GM12878 (cell line): ENCODE measurements at regions of chr3 and their contacts with region 1.

Region 1: GRCh38 chr3:134904241-134904771 is 109.2 kb downstream of the EPHB1 start:
- DNase-seq: peak; percentile 97
- ATAC-seq: peak; percentile 94
- H3K4me3 ChIP-seq: peak overlapping the region; percentile 27; the same call in 1 of the 2 replicates
- H3K27ac ChIP-seq: peak overlapping the region; percentile 79
- H3K4me1 ChIP-seq: peaks cover 39% of the 10 kb centered on the region
- H3K27me3 ChIP-seq: no peaks in the 10 kb centered on the region
- CTCF ChIP-seq: no peak
- EP300 ChIP-seq: peak; percentile 98 to 99
- POLR2A ChIP-seq: no peak
- RAD21 ChIP-seq: 0 out of 2 replicates have a peak, but pooled peaks have one; percentile 16

Region 2: DNA sequence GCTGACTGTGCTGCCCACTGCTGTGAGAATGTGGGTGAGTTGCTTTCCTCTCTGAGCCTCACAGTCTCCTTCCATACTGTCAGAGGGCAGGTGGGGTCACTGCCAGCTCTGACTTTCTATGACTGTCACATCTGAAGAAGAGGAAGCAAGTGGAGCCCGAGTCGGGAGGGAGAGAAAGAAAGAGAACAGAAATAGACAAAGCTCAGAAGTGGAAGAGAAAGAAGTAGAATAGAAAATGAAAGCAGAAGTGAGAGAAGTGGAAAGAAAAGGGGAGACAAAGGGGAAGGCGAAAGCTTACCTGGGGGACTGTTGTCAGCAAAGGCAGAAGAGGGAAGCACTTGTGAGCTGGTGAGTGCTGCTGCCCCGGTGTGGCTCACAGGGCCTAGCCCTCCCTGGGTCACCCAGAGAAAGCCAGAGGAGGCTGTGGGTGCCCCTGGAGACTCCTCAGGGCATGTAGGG is 51.4 kb before region 1 on chr3:
- CTCF ChIA-PET with region 1: interaction called, 5 read pairs
- POLR2A ChIA-PET with region 1: interaction called, 6 read pairs
- RAD21 ChIA-PET with region 1: interaction called, 23 read pairs
- SMC1A ChIA-PET with region 1: interaction called, 16 read pairs
- in situ Hi-C with region 1: no loop called
- intact Hi-C with region 1: loop called (anchors 5 kb)
- DNase-seq: peak; percentile 91
- ATAC-seq: peak; percentile 96
- H3K4me3 ChIP-seq: no peak overlapping the region
- H3K27ac ChIP-seq: peak overlapping the region; percentile 68
- H3K4me1 ChIP-seq: peaks cover 36% of the 10 kb centered on the region
- H3K27me3 ChIP-seq: no peaks in the 10 kb centered on the region
- CTCF ChIP-seq: peak in 2 of 3 experiments; percentile 25 to 32; a peak in 2 of 6 replicates
- EP300 ChIP-seq: peak; percentile 56 to 69; a peak in 2 of 4 replicates
- POLR2A ChIP-seq: peak; percentile 56; the same call in 1 of the 2 replicates
- RAD21 ChIP-seq: peak; percentile 39

Region 3: GRCh38 chr3:134918441-134918840 is 14.1 kb after region 1 on chr3:
- CTCF ChIA-PET with region 1: interaction called, 15 read pairs
- POLR2A ChIA-PET with region 1: interaction called, 9 read pairs
- RAD21 ChIA-PET with region 1: interaction called, 13 read pairs
- SMC1A ChIA-PET with region 1: interaction called, 47 read pairs
- in situ Hi-C with region 1: no loop called
- intact Hi-C with region 1: no loop called
- DNase-seq: peak; percentile 78
- ATAC-seq: peak; percentile 97
- H3K4me3 ChIP-seq: no peak overlapping the region
- H3K27ac ChIP-seq: peak overlapping the region; percentile 80
- H3K4me1 ChIP-seq: peaks cover 21% of the 10 kb centered on the region
- H3K27me3 ChIP-seq: no peaks in the 10 kb centered on the region
- CTCF ChIP-seq: no peak
- EP300 ChIP-seq: 0 out of 4 replicates have a peak, but pooled peaks of 1 of the 2 experiments have one; percentile 10
- POLR2A ChIP-seq: no peak
- RAD21 ChIP-seq: no peak

Region 4: DNA sequence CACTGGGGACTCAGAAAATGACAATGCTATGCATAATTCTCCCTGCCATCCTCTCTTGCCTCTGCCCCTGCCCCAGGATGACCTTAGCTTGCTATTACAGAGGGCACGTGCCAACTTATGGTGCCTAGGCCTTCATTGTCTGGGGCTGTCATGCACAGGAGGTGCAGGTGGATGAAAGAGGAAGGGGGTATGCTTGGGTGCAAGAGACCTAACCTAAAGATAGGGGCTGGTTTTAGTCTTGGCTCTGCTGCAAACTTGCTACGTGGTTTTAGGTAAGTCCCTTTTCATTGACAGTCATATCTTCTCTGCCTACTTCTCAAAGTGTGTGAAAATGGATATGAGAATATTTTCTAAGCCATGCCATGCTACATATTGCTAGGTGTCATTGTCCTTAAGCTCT is 52.1 kb after region 1 on chr3:
- CTCF ChIA-PET with region 1: interaction called, 3 read pairs
- POLR2A ChIA-PET with region 1: interaction called, 7 read pairs
- RAD21 ChIA-PET with region 1: interaction called, 36 read pairs
- SMC1A ChIA-PET with region 1: interaction called, 35 read pairs
- in situ Hi-C with region 1: no loop called
- intact Hi-C with region 1: no loop called
- DNase-seq: peak; percentile 76
- ATAC-seq: peak; percentile 85
- H3K4me3 ChIP-seq: no peak overlapping the region
- H3K27ac ChIP-seq: peak overlapping the region; percentile 73
- H3K4me1 ChIP-seq: peaks cover 27% of the 10 kb centered on the region
- H3K27me3 ChIP-seq: no peaks in the 10 kb centered on the region
- CTCF ChIP-seq: no peak
- EP300 ChIP-seq: no peak
- POLR2A ChIP-seq: no peak
- RAD21 ChIP-seq: no peak

Region 5: DNA sequence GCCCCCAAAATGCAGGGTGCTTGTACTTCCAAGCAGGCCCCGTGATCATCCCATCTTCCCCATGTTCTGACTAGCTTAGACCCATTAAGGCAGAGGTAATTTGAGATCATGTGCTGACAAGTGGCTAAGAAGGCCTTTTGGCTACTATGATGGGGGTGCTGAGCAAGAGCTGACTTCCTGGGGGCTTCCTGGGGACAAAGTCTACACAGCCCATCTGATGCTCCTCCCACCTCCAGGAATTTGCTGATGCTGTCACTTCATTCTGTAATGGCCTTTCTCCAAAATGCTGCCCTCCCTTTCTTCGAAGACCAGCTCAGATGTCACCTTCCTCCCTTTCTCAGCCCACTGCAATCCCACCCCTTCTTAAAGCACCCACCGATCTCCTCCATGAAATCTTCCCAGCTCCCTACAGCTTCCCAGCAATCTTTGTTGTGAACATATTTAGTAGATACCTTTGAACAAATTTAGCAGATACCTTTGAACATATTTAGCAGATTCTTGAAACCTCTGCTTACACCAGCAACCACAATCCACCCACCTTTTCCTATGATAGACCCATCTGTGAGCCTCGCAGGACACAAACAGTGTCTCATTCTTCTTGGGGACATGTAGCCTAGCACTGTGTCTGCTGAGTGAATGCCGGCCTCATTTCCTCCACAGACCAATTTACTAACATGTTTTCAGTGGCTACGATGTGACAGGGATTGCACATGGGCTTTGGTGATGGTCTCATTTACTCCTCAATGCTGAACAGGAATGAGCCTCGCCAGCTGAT is 114.0 kb after region 1 on chr3:
- CTCF ChIA-PET with region 1: interaction called, 6 read pairs
- POLR2A ChIA-PET with region 1: interaction called, 4 read pairs
- RAD21 ChIA-PET with region 1: interaction called, 18 read pairs
- SMC1A ChIA-PET with region 1: interaction called, 5 read pairs
- in situ Hi-C with region 1: no loop called
- intact Hi-C with region 1: no loop called
- DNase-seq: no peak
- ATAC-seq: peak; percentile 82
- H3K4me3 ChIP-seq: no peak overlapping the region
- H3K27ac ChIP-seq: peak overlapping the region; percentile 43
- H3K4me1 ChIP-seq: peaks cover 18% of the 10 kb centered on the region
- H3K27me3 ChIP-seq: no peaks in the 10 kb centered on the region
- CTCF ChIP-seq: no peak
- EP300 ChIP-seq: 0 out of 4 replicates have a peak, but pooled peaks of 1 of the 2 experiments have one; percentile 11
- POLR2A ChIP-seq: no peak
- RAD21 ChIP-seq: no peak

Region 6: GRCh38 chr3:135229018-135229495 is 324.8 kb after region 1 on chr3:
- CTCF ChIA-PET with region 1: interaction called, 3 read pairs
- POLR2A ChIA-PET with region 1: no interaction called
- RAD21 ChIA-PET with region 1: interaction called, 5 read pairs
- SMC1A ChIA-PET with region 1: interaction called, 10 read pairs
- in situ Hi-C with region 1: no loop called
- intact Hi-C with region 1: no loop called
- DNase-seq: no peak
- ATAC-seq: no peak
- H3K4me3 ChIP-seq: no peak overlapping the region
- H3K27ac ChIP-seq: no peak overlapping the region
- H3K4me1 ChIP-seq: peaks cover 20% of the 10 kb centered on the region
- H3K27me3 ChIP-seq: no peaks in the 10 kb centered on the region
- CTCF ChIP-seq: no peak
- EP300 ChIP-seq: no peak
- POLR2A ChIP-seq: no peak
- RAD21 ChIP-seq: no peak